Endothelial cell of umbilical vein (primary cell): ENCODE measurements at regions of chr4 and their contacts with region 1.

Region 1: GRCh38 chr4:95105112-95105511 is 347.4 kb downstream of the BMPR1B start:
- DNase-seq: no peak
- H3K4me3 ChIP-seq: no peak overlapping the region
- H3K27ac ChIP-seq: no peak overlapping the region
- H3K4me1 ChIP-seq: peaks cover 25% of the 10 kb centered on the region
- H3K27me3 ChIP-seq: no peaks in the 10 kb centered on the region
- CTCF ChIP-seq: no peak
- POLR2A ChIP-seq: no peak

Region 2: DNA sequence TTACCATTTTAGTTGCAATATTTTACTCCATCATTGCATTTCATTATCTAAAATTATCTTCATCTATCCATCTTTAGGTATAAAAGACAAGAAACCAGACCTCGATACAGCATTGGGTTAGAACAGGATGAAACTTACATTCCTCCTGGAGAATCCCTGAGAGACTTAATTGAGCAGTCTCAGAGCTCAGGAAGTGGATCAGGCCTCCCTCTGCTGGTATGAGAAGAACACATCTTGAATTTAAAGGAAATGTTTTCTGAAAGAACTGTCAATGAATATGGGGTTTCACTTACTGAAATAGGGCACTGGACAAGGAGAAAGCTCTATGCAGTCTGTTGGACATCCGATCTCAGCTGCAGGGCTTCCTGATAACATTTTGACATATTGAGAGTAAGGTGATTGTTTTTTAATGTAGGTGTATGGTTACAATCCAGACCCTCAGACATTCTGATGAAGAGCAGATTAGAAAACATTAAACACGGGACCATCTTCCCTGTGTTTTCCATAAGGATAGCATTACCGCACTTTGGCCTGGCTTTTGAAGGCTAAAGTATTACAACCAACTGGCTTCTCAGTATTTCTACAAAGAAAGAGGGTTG is 19.9 kb after region 1 on chr4:
- CTCF ChIA-PET with region 1: interaction called, 14 read pairs
- POLR2A ChIA-PET with region 1: no interaction called
- dilution Hi-C with region 1: no loop called
- intact Hi-C with region 1: no loop called
- DNase-seq: peak; percentile 68
- H3K4me3 ChIP-seq: no peak overlapping the region
- H3K27ac ChIP-seq: no peak overlapping the region
- H3K4me1 ChIP-seq: peaks cover 14% of the 10 kb centered on the region
- H3K27me3 ChIP-seq: no peaks in the 10 kb centered on the region
- CTCF ChIP-seq: peak; percentile 53 to 55
- POLR2A ChIP-seq: no peak